IMR-90 (cell line): ENCODE measurements at regions of chr20 and their contacts with region 1.

Region 1: GRCh38 chr20:58850693-58851174 is at the start of gene GNAS-AS1:
- DNase-seq: peak; percentile 87
- ATAC-seq: peak; percentile 89
- H3K4me3 ChIP-seq: peak within 1 kb of the TSS; percentile 88
- H3K27ac ChIP-seq: peak within 1 kb of the TSS; percentile 7; the same call in 1 of the 2 replicates
- H3K4me1 ChIP-seq: peaks cover 2% of the 10 kb centered on the region; the same call in 1 of the 2 replicates
- H3K27me3 ChIP-seq: peaks cover 36% of the 10 kb centered on the region
- CTCF ChIP-seq: no peak
- POLR2A ChIP-seq: no peak
- RAD21 ChIP-seq: no peak
- total RNA-seq, gene GNAS-AS1: 0.54 and 0.83 TPM in 2 replicates

Region 2: DNA sequence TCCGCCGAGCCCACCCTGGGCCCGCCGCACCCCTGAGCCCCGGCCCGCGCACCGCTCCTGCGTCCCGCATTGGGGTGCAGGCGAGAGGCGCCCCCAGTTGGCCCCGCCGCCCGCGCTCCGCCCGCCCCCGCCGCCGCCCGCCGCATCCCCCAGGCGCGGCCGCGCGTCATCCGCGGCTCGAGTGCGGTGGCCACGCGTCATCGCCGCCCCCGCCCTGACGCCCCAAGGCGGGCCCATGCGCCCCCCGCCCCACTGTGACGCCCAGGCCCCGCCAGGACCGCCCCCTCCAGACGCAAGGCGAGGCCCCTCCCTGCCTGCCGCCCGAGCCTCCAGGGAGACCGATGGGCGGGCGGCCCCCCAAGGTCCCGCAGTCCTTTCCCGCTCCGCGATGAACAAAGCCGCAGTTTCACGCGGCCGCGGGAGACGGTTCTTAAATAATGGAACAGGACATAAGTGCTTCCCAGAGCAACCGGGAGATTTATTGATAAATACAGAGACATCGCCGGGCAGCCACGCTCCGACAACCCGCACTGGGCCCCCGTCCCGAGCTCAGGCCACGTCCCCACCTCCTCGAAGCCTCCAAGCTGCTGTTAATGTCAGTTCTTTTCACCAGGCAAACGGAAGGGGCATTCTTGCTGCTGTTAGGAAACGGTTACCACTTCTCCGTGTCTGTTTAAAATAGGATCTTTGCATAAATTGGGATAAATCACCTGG is 622.1 kb before region 1 on chr20 and contains the start of gene ANKRD60:
- CTCF ChIA-PET with region 1: no interaction called
- POLR2A ChIA-PET with region 1: no interaction called
- dilution Hi-C with region 1: no loop called
- in situ Hi-C with region 1: loop called (anchors 10 kb)
- intact Hi-C with region 1: no loop called
- DNase-seq: peak; percentile 73
- ATAC-seq: peak; percentile 84
- H3K4me3 ChIP-seq: peak within 1 kb of the TSS; percentile 35
- H3K27ac ChIP-seq: 0 out of 2 replicates have a peak within 1 kb of the TSS, but pooled peaks have one; percentile 6
- H3K4me1 ChIP-seq: no peaks in the 10 kb centered on the region
- H3K27me3 ChIP-seq: peaks cover 25% of the 10 kb centered on the region
- CTCF ChIP-seq: no peak
- POLR2A ChIP-seq: peak; percentile 72
- RAD21 ChIP-seq: no peak
- total RNA-seq, gene ANKRD60: not detected in 2 replicates

Region 3: DNA sequence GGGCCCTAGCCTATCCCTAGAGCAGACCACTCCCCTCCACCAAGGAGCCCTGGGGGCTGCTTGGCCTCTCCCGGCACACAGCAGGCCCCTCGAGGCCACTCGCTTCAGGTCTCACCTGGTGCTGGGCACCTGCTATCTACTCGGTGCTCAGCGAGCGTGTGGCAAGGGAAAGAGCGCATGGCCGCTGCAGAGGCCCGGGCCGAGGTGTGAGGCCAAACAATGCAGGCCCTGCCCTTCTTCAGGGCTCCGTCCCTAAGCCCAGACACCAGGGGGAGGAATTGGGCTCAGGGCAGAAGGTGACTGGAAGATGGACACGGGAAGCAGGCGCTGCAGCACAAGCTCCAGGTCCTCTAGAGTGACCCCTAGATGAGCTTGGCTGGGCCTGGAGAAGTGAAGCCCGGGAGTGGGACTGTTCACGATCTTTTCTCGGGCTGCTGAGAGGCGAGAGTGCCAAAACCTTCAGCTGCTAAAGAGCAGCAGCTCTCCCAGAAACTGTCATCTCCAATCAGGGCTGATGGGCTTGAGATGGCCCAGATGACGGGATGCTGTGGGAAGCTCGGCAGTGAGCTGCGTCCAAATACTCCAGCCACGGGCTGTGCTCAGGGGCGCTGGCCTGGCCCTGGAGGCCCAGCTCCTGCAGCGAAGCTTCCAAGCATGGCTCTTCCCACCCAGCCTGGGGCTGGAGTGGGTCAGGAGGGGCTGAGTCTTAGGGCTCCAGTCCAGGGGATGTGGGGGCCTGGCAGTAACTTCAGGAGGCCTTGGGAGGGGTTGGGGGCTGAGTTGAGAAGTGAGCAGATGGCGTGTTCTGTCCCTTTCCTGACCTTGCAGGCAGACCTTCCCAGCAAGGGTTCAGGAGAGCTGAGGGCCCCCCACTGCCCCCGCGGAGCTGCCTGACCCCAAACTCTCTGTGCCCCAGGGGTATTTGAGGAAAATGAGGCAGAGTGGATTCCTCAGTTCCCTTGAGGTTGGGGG is 379.3 kb before region 1 on chr20:
- CTCF ChIA-PET with region 1: no interaction called
- POLR2A ChIA-PET with region 1: no interaction called
- dilution Hi-C with region 1: no loop called
- in situ Hi-C with region 1: loop called (anchors 10 kb)
- intact Hi-C with region 1: no loop called
- DNase-seq: peak; percentile 15
- ATAC-seq: peak; percentile 32; the same call in 1 of the 2 replicates
- H3K4me3 ChIP-seq: no peak overlapping the region
- H3K27ac ChIP-seq: no peak overlapping the region
- H3K4me1 ChIP-seq: no peaks in the 10 kb centered on the region; the same call in 1 of the 2 replicates
- H3K27me3 ChIP-seq: no peaks in the 10 kb centered on the region
- CTCF ChIP-seq: no peak
- POLR2A ChIP-seq: no peak
- RAD21 ChIP-seq: no peak

Region 4: GRCh38 chr20:58692594-58693226 is 158.0 kb before region 1 on chr20 and contains the start of gene NPEPL1:
- CTCF ChIA-PET with region 1: no interaction called
- POLR2A ChIA-PET with region 1: no interaction called
- dilution Hi-C with region 1: no loop called
- in situ Hi-C with region 1: no loop called
- intact Hi-C with region 1: loop called (anchors 5 kb)
- DNase-seq: peak; percentile 67
- ATAC-seq: peak; percentile 94
- H3K4me3 ChIP-seq: peak within 1 kb of the TSS; percentile 43
- H3K27ac ChIP-seq: peak within 1 kb of the TSS; percentile 31; the same call in 1 of the 2 replicates
- H3K4me1 ChIP-seq: peaks cover 19% of the 10 kb centered on the region
- H3K27me3 ChIP-seq: no peaks in the 10 kb centered on the region
- CTCF ChIP-seq: peak; percentile 45
- POLR2A ChIP-seq: no peak
- RAD21 ChIP-seq: peak; percentile 34
- total RNA-seq, gene NPEPL1: 6.3 and 7.2 TPM in 2 replicates